A673 (cell line): ENCODE measurements at regions of chr2 and their contacts with region 1.

Region 1: GRCh38 chr2:46461011-46461674 is 18.2 kb upstream of the TMEM247 start:
- DNase-seq: peak; percentile 43
- H3K4me3 ChIP-seq: no peak overlapping the region
- H3K27ac ChIP-seq: no peak overlapping the region
- H3K4me1 ChIP-seq: no peaks in the 10 kb centered on the region
- H3K27me3 ChIP-seq: no peaks in the 10 kb centered on the region
- CTCF ChIP-seq: peak; percentile 98

Region 2: GRCh38 chr2:45391866-45392265 is 1069.3 kb before region 1 on chr2:
- CTCF ChIA-PET with region 1: no interaction called
- POLR2A ChIA-PET with region 1: no interaction called
- intact Hi-C with region 1: no loop called
- DNase-seq: no peak
- H3K4me3 ChIP-seq: no peak overlapping the region
- H3K27ac ChIP-seq: no peak overlapping the region
- H3K4me1 ChIP-seq: peaks cover 15% of the 10 kb centered on the region
- H3K27me3 ChIP-seq: no peaks in the 10 kb centered on the region
- CTCF ChIP-seq: no peak

Region 3: DNA sequence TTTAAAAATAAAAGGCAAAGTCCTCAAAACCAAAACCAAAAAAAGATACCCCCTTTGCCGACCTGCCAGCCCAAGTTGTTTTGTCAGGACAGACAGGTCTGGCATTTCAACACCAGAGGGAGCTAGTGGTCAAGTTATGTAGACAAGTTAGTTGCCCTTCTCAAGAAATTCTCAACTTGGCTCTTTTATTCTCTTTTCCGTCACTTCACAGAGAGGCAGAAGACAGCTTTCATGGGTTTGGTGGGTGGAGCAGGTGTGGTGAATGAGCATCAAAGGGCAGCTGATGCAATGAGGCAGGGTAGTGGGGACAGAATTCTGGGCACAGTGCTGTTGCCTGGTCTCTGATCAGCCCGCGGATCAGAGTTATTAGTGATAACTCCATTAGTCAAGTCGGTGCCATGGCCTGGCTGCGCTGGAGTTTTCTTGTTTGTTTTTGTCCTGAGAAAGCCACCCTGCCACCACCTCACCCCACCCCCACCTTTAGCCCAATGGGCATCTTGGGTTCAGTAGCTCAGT is 467.6 kb before region 1 on chr2:
- CTCF ChIA-PET with region 1: interaction called, 4 read pairs
- POLR2A ChIA-PET with region 1: no interaction called
- intact Hi-C with region 1: loop called (anchors 1 kb)
- DNase-seq: peak; percentile 73
- H3K4me3 ChIP-seq: no peak overlapping the region
- H3K27ac ChIP-seq: no peak overlapping the region
- H3K4me1 ChIP-seq: no peaks in the 10 kb centered on the region
- H3K27me3 ChIP-seq: no peaks in the 10 kb centered on the region
- CTCF ChIP-seq: peak; percentile 82